Dendritic cell treated with granulocyte-macrophage colony-stimulating factor and Interleukin-4, amounts not matched to agents 40 ng/mL and 50 ng/mL, for 4 days (primary cell): ENCODE measurements at regions of chr4 and their contacts with region 1.

Region 1: DNA sequence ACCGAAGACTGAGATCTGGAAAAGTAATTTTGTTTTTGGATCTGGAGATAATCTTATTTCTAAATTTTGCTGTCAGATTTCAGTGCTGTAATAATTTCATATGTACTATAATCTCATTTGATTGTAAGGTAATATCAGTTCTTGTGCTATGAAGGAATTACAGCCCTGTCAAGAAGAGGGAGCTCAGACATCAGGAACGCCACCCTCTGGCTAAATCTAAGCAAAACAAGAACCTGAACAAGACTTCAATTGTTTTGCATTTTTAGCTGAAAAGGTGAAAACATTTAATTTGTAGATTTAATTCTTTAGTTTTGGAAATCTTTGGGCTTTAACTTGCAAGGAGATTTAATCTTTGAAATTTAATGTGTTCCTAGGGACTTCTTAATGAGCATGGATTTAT is 525.4 kb upstream of the HS3ST1 start:
- H3K4me3 Mint-ChIP-seq: no peak overlapping the region
- H3K27ac Mint-ChIP-seq: no peak overlapping the region
- H3K4me1 Mint-ChIP-seq: no peaks in the 10 kb centered on the region
- H3K27me3 Mint-ChIP-seq: no peaks in the 10 kb centered on the region

Region 2: GRCh38 chr4:11765849-11766453 is 188.1 kb before region 1 on chr4:
- intact Hi-C with region 1: loop called (anchors 5 kb)
- H3K4me3 Mint-ChIP-seq: no peak overlapping the region
- H3K27ac Mint-ChIP-seq: no peak overlapping the region
- H3K4me1 Mint-ChIP-seq: no peaks in the 10 kb centered on the region
- H3K27me3 Mint-ChIP-seq: no peaks in the 10 kb centered on the region

Region 3: GRCh38 chr4:11805842-11806241 is 148.3 kb before region 1 on chr4:
- intact Hi-C with region 1: loop called (anchors 10 kb)
- H3K4me3 Mint-ChIP-seq: no peak overlapping the region
- H3K27ac Mint-ChIP-seq: no peak overlapping the region
- H3K4me1 Mint-ChIP-seq: no peaks in the 10 kb centered on the region
- H3K27me3 Mint-ChIP-seq: no peaks in the 10 kb centered on the region

Region 4: DNA sequence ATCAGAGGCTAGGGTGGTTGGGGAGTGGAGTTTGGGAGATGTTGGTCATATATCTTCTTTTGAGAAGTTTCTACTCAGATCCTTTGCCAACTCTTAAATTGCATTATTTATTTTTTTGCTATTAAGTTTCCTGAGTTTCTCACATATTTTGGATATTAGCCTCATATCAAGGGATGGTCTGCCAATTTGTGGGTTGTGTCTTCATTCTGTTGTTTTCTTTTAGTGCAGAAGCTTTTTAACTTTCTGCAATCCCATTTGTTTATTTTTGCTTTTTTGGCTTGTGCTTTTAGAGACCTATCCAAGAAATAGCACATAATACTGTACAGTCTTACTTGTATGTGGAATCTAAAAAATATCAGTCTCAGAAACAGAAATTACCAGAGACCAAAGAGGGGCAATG is 16.2 kb before region 1 on chr4:
- intact Hi-C with region 1: loop called (anchors 1 kb)
- H3K4me3 Mint-ChIP-seq: no peak overlapping the region
- H3K27ac Mint-ChIP-seq: no peak overlapping the region
- H3K4me1 Mint-ChIP-seq: no peaks in the 10 kb centered on the region
- H3K27me3 Mint-ChIP-seq: no peaks in the 10 kb centered on the region

Region 5: GRCh38 chr4:12005471-12005870 is 51.4 kb after region 1 on chr4:
- intact Hi-C with region 1: no loop called
- H3K4me3 Mint-ChIP-seq: no peak overlapping the region
- H3K27ac Mint-ChIP-seq: no peak overlapping the region
- H3K4me1 Mint-ChIP-seq: no peaks in the 10 kb centered on the region
- H3K27me3 Mint-ChIP-seq: no peaks in the 10 kb centered on the region